Dendritic cell treated with granulocyte-macrophage colony-stimulating factor and Interleukin-4, amounts not matched to agents 40 ng/mL and 50 ng/mL, for 4 days (primary cell): ENCODE measurements at regions of chr5 and their contacts with region 1.

Region 1: DNA sequence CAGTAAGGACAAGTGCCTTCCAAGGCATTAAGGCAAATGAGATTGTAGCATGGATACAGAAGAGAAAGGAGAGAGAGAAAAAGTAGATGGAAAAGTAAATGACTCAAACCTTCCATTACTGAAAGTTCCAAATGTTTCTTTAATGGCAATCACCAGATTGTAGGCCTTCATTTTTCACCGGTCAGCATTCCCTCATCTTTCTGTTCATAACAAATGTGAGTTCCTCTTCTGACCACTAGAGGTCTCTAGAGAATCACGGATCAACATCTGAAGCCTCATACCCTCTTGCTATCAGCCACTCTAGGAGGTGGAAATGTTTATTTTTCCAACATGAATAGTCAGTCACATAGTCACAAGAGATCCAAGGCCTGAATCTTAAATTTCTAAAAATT is 73.6 kb upstream of the RPS23 start:
- H3K4me3 Mint-ChIP-seq: no peak overlapping the region
- H3K27ac Mint-ChIP-seq: no peak overlapping the region
- H3K4me1 Mint-ChIP-seq: peaks cover 14% of the 10 kb centered on the region
- H3K27me3 Mint-ChIP-seq: no peaks in the 10 kb centered on the region

Region 2: DNA sequence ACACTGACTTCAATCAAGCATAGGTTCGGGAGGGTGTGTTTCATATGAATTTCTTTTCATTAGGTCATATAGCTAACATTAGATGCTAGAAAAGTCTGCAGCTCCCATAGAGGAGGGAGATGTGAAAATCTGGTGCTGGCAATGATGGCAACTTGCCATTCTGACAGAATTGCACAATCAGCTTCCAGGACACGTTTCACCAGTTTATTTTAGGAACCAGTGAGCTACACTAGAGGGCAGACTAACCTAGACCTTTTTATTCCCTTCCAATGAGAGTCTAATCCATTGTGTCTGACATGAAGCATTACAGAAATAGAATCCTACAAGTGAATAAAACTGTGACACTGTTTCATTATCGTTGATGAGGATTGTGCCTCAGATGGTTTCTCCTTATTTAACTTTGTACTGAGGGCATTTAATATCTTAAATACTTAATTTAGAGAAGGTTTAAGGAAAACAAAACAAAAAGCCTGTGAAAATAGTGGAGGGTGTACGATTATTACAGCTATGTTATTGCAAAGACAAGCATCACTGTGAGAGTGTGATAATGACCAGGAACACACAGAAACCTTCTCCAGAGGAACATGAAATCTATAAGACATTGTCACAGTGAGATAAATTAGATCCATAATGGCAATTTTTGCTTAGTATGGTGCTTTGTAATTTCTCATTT is 289.7 kb after region 1 on chr5:
- intact Hi-C with region 1: loop called (anchors 5 kb)
- H3K4me3 Mint-ChIP-seq: no peak overlapping the region
- H3K27ac Mint-ChIP-seq: no peak overlapping the region
- H3K4me1 Mint-ChIP-seq: peaks cover 7% of the 10 kb centered on the region
- H3K27me3 Mint-ChIP-seq: no peaks in the 10 kb centered on the region

Region 3: DNA sequence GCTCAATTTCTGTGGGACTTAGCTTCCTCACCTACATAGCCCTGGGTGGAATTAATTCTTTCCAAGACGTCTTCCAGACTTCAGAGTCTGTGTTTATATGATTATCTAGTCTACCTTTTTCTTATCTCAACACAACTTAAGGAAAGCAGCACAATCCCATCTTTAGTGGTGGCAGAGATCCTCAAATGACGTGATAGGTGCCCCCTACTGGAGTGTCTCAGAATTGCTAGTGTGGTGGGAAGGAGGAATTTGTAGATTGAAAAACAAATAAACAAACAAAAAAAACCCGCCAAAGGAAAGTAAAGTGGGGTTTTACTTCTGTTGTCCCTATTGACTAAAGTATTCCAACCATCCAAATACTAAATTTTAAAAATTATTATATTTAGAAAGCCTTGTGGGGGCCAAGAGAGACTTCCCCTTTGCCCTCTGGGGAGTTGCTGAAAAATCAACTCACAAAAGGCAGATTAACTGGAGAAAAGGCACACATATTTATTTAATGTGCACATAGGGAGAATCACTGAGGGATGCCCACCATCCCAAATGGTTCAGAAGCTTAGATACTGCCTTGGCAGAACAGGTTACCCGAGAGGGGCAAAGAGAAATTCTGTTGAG is 442.2 kb after region 1 on chr5:
- intact Hi-C with region 1: loop called (anchors 10 kb)
- H3K4me3 Mint-ChIP-seq: no peak overlapping the region
- H3K27ac Mint-ChIP-seq: no peak overlapping the region
- H3K4me1 Mint-ChIP-seq: no peaks in the 10 kb centered on the region
- H3K27me3 Mint-ChIP-seq: no peaks in the 10 kb centered on the region

Region 4: DNA sequence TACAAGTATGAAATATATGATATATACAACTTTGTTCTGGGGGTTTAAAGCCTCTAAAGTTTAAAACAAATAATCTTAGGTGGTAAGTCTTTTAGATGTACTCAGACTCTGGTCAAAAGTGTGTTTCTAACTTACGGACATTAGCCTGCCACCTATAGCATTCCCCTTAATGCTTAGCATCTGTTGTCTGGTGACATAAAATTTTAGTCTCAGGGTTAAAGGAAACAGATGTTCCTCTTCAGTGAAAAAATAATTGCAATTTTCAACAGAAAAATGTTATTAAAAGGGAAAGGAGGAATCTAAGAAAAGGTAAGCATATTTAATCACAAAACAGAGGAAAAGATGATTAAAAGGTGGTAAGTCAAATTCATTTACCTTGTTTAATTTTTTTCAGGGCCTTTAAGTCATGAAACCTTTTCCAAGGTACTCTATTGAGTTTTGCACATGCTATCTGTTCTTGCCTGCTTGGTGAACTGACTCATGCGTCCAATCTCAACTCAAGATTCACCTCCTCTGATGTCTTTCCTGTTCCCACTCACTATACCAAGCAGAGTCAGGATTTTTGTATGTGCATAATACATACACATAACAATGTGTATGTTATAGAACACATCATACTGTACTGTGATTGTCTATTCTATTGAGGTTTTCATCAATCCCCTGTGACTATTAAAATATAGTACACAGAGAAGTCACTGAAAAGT is 717.5 kb after region 1 on chr5:
- intact Hi-C with region 1: loop called (anchors 10 kb)
- H3K4me3 Mint-ChIP-seq: no peak overlapping the region
- H3K27ac Mint-ChIP-seq: no peak overlapping the region
- H3K4me1 Mint-ChIP-seq: peaks cover 40% of the 10 kb centered on the region
- H3K27me3 Mint-ChIP-seq: no peaks in the 10 kb centered on the region

Region 5: GRCh38 chr5:83430130-83431010 is 1078.6 kb after region 1 on chr5:
- intact Hi-C with region 1: loop called (anchors 5 kb)
- H3K4me3 Mint-ChIP-seq: no peak overlapping the region
- H3K27ac Mint-ChIP-seq: no peak overlapping the region
- H3K4me1 Mint-ChIP-seq: peaks cover 19% of the 10 kb centered on the region
- H3K27me3 Mint-ChIP-seq: no peaks in the 10 kb centered on the region

Region 6: DNA sequence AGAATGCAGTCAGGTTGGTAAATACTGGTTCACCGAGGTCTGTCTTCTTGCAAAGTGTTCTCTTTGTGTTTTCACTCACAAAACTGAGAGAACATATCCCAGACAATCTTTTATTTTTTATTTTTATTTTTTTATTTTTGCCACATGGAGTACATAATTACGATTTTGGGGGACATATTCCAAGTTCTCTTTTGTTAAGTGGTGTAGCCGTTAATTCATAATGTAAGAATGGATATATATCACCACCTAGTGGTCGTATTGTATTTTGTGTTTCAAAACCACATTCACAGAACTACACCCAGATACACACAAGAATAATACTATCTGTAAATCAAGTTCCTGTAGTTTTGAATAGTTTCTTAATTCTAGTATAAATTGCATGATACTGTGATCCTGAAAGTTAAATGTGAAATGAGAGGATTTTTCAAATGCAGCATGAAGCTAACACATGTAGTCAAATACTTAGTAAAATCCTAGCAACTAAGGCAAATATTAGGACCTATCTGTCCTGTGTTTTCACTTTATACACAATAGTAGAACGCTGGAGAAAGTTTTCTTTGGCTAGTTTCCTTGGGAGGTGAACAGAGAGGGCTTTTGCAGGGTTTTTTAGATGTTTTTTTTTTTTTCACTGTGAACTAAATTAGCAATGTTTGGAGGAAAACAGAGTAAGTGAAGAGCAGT is 1212.5 kb after region 1 on chr5:
- intact Hi-C with region 1: loop called (anchors 2 kb)
- H3K4me3 Mint-ChIP-seq: no peak overlapping the region
- H3K27ac Mint-ChIP-seq: no peak overlapping the region
- H3K4me1 Mint-ChIP-seq: peaks cover under 1% of the 10 kb centered on the region
- H3K27me3 Mint-ChIP-seq: no peaks in the 10 kb centered on the region